Tibial artery (tissue), 4 donors: ENCODE measurements at regions of chr14 and their contacts with region 1.

Region 1: GRCh38 chr14:60164712-60165546 is at the start of gene DHRS7:
- DNase-seq: peak; percentile 84 to 92
- H3K4me3 ChIP-seq: peak within 1 kb of the TSS; percentile 88 to 99
- H3K27ac ChIP-seq: peak within 1 kb of the TSS; percentile 93 to 98
- H3K4me1 ChIP-seq: peaks cover 0 to 57% (median 24%) of the 10 kb centered on the region in 4 donors
- H3K27me3 ChIP-seq: no peaks in the 10 kb centered on the region
- CTCF ChIP-seq: peak; percentile 45 to 68

Region 2: DNA sequence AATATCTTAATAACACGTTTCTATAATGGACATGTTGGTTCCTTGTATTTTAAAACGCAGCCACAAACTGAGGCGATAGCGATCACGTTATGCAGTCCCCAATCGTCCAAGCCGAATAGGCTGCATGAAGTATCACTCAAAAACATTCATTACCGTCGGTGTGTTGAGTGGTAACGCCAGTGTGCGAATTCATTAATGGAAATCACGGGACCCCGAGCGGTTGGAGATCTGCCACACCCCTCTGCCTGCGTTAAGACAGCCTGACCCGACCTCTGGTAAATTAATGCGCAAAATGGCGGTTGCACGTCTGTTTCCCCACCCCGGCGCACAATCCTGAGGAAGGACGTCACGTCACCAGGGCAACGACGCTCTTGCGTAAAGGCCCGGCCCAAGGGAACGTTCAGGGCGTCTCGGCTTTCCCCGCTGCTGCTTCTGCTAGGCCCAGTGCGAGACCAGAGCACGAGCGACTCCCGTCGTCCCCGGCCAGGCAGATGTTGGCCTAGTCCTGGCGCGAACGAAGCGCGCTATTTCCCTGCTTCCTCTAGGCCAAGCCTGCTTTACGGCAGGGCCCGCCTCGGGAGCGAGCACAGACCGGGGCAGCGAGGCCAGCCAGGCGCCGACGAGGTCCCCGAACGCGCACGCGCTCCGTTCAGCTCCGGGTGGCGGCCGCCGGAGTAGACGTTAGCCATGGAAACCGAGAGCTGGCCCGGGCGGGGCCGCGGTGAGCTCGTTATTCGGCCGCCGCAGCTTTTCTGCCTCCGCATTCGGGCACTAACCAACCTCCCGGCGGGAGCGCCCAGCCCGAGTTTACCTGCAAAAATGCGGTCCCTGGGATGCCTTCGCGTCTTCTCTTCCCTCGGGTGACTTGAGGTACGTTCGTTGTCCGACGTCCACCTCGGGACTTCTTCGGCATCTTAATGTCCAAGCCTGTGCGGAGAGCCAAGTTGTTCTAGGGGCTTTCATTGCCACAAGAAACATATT is 73.1 kb before region 1 on chr14 and contains the start of gene PCNX4:
- intact Hi-C with region 1: loop called (anchors 5 kb)
- DNase-seq: peak; percentile 96 to 99
- H3K4me3 ChIP-seq: peak within 1 kb of the TSS; percentile 74 to 75
- H3K27ac ChIP-seq: peak within 1 kb of the TSS; percentile 96 to 97
- H3K4me1 ChIP-seq: peaks cover 0 to 35% (median 7%) of the 10 kb centered on the region in 4 donors
- H3K27me3 ChIP-seq: no peaks in the 10 kb centered on the region
- CTCF ChIP-seq: no peak

Region 3: DNA sequence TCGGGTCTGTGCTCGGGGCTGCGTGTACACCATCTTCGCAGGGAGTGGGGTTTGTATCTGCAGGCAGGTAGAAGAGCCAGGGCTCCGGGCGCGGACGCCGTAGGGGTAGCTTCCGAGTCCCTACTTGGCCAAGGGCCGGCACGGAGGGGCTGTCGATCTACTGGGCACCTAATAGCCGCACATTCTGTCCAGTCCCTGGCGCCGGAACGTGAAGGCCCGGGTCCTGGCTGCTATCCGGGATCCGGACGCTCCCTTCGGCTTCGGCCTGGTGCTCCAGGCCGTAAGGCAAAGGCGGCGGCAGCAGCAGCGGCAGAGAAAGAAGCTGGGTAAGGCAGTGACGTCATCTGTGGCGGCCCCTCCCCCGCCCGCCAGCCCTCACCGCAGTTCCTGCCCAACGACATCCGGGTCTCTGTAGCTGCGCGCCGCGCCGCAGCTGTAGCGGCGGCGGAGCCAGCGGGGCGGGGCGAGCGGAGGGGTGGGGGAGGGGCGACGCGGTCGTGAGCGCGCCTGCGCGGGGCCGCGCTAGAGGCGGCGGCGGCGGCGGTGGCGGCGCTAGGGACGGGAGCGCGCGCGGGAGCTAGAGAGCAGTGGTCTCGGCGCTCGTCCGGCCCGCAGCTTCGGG is 83.9 kb after region 1 on chr14 and contains the start of gene PPM1A:
- intact Hi-C with region 1: loop called (anchors 10 kb)
- DNase-seq: peak; percentile 93 to 97
- H3K4me3 ChIP-seq: peak within 1 kb of the TSS; percentile 69 to 98
- H3K27ac ChIP-seq: peak within 1 kb of the TSS; percentile 96 to 98
- H3K4me1 ChIP-seq: peaks cover 0 to 37% (median 25%) of the 10 kb centered on the region in 4 donors
- H3K27me3 ChIP-seq: no peaks in the 10 kb centered on the region
- CTCF ChIP-seq: no peak